Left cardiac atrium (tissue), 4 donors: ENCODE measurements at regions of chr3 and their contacts with region 1.

Region 1: DNA sequence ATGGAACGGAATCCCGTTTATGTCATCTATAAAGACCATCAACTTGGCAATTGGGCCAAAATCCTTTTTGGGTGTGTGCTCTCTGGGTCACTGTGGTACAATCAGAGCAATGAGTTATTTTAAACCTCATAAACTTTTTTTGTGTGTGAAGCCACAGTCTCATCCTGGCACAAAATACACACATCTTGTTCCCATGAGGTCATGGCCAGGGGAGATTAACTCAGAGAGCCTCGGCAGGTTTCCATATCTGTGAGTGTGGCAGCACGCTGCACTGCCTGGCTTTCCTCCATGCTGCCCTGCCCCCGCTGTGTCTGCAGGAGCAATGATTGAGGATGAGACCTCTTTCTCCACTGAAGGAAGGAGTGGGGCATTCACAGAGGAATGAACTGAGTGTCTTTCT is 54.0 kb upstream of the DLG1 start:
- DNase-seq: peak; percentile 74
- ATAC-seq: peak; percentile 82 to 87

Region 2: DNA sequence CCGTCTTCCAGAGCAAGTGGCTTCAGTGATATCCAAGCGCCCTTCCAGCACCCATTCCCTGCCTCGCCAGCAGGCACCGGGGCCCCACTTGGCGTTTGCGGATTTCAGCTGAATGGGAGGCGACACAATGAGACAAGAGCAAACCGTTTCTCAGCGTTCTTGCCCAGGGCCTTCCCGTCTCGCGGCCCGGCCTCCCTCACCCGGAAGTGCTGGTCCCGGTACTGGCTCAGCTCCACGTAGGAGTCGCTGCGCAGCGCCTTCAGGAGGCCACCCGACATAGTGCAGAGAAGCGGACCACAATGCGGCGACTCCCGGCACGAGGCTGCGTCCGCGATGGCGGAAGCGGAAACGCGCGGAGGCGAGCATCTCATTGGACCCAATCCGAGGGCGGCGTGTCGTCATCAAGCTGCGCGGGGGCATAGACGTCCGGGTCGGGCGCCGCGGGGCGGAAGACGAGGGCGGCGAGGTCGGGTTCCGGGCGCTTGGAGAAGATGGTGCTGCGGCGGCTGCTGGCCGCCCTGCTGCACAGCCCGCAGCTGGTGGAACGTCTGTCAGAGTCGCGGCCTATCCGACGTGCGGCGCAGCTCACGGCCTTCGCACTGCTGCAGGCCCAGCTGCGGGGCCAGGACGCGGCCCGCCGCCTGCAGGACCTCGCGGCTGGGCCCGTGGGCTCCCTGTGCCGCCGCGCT is 410.0 kb before region 1 on chr3 and contains the start of gene NCBP2:
- intact Hi-C with region 1: no loop called
- DNase-seq: peak; percentile 99
- ATAC-seq: peak; percentile 96
- total RNA-seq, gene NCBP2: 33.6 to 41.0 TPM

Region 3: GRCh38 chr3:197186887-197187588 is 165.3 kb before region 1 on chr3:
- intact Hi-C with region 1: no loop called
- DNase-seq: no peak
- ATAC-seq: peak; percentile 57 to 59

Region 4: DNA sequence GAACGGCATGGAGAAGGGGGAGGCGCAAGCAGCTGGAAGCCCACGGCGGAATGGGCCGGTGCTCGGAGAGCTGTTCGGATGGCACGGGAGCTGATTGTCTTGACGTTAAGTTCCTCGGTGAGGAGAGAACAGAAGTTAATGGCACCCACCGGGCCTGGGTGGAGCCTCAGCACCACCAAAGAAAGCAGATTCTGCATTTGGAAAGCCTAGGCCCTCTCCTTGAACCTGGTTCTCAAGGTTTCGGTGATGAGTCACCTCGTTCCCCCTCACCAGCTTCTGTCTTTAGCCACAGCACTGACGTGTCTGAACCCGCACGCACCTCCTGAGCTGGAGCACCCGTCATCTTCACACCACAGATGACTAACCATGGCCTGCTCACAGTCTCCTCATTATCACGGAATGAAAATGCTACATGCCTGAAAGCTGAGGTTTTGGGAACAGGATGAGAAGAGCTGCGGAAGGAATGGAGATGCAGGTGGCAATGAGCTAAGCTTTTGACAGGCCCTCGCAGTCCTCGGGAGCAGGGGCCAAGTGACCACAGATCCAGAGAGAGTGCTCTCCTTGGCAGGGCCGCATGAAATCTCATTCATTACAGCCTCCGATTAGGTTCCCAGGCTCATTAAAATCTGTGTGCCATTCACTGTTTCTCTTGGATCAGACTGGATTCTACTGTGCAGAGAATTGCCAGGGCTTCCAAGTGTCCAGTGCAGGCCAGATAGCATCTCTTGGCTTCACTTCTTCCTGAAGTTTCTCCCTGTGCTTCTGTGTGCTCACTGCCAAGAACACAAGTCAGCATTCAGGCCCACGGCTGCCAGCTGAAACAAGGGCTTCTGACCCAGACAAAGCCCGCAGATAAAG is 42.3 kb after region 1 on chr3:
- intact Hi-C with region 1: loop called in 1 of 2 experiments (anchors 2 kb)
- DNase-seq: peak; percentile 81
- ATAC-seq: peak; percentile 90 to 96